Dorsolateral prefrontal cortex (tissue), 120 donors: ENCODE measurements at regions of chr17 and their contacts with region 1.

Region 1: GRCh38 chr17:81142301-81143199 is 22.8 kb upstream of the PVALEF start:
- DNase-seq: peak; percentile 79 to 90 (median 84)
- H3K4me3 ChIP-seq: peak overlapping the region in 7 of 59 donors; percentile 0 to 31 (median 6)
- H3K27ac ChIP-seq: peak overlapping the region in 58 of 59 donors; percentile 53 to 96 (median 86)
- H3K27me3 ChIP-seq: no peaks in the 10 kb centered on the region
- CTCF ChIP-seq: peak in 55 of 56 donors; percentile 49 to 89 (median 74)

Region 2: GRCh38 chr17:81189670-81190530 is 47.4 kb after region 1 on chr17:
- intact Hi-C with region 1: loop called in 1 of 2 experiments (anchors 2 kb)
- DNase-seq: peak in 8 of 10 donors; percentile 26 to 66 (median 52)
- H3K4me3 ChIP-seq: no peak overlapping the region
- H3K27ac ChIP-seq: no peak overlapping the region
- H3K27me3 ChIP-seq: no peaks in the 10 kb centered on the region
- CTCF ChIP-seq: peak in 50 of 56 donors; percentile 9 to 70 (median 47)

Region 3: DNA sequence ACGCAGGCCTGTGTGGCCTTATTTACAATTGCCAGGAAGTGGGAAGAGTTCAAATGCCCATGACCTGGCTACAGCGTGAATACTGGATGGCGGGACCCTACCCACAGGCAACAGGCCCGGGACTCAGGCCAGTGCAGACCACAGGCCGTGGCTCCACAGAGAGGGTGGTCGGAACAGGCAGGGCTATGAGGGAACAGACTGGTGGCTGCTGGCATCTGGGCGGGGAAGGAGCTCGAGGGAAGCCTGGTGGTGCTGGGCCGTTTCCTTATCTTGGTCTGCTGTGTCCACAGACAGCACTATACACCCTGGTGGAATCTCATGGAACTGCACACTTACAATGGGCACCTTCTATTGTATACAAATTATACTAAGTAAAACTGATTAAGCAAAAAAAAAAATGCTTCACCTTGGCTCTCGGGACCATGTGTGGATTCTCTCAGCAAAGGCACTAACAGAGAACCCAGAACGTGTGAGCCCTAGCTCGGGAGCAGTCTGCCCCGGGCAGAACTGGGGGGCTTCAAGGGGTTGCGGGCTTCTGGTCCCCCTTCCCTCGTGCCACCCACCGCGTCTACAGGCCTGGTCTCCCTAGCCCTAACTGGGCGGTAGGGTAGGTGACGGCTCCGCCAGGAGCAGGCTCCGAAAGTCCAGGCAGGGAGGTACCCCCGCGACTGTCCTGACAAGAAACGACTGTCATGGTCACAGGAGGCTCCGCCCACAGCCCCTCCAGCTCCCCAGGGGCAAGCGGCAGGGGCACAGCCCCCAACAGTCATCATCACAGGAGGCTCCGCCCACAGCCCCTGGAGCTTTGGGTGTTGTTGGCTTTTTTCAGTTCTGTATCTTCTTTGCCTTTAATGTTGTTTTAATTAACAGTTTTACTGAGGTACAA is 58.4 kb after region 1 on chr17:
- intact Hi-C with region 1: loop called (anchors 5 kb)
- DNase-seq: peak in 8 of 10 donors; percentile 64 to 80 (median 68)
- H3K4me3 ChIP-seq: no peak overlapping the region
- H3K27ac ChIP-seq: peak overlapping the region in 37 of 59 donors; percentile 14 to 83 (median 58)
- H3K27me3 ChIP-seq: no peaks in the 10 kb centered on the region
- CTCF ChIP-seq: peak; percentile 50 to 86 (median 74)